CD4-positive, alpha-beta T cell (primary cell): ENCODE measurements at regions of chr2 and their contacts with region 1.

Region 1: DNA sequence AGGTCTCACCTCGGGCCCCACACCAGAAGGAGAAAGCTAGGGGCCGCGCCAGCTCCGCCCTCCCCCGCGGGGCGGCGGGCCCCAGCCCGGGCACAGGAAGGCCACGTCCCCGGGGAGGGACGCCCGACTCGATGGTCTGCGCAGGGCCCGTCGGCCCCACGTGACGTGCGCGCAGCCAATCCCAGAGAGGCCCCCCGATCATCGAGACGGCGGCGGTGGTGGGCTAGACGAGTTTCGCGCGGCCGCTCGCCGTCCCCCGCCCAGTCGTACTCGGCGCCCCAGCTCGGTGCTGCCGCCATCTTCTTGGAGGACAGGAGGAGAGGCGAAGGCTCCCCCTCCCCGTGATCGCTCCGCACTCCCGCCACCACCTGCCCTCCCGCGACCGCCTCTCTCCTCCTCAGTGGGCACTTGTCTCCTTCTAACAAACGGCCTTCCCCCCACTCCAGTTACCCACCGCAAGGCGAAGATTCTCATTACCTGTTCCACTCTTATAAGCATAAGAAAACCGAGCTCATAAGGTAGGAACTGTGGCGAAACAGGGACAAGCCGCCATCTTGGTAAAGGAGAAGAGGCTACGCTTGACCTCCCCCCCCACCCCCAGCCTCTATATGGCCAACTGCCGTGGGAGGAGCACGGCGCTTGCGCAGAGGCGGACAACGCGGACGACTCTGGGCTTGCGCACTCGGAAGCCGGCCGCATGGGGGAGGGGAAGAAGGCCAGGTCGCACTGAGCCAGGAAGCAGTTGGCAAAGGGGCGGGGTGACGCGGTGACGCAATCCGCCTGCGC is at the start of gene HDLBP:
- DNase-seq: peak; percentile 100
- ATAC-seq: peak; percentile 71
- H3K4me3 ChIP-seq: peak within 1 kb of the TSS; percentile 88
- H3K4me3 Mint-ChIP-seq: peak within 1 kb of the TSS; percentile 98
- H3K27ac ChIP-seq: peak within 1 kb of the TSS; percentile 96 to 98
- H3K27ac Mint-ChIP-seq: peak within 1 kb of the TSS; percentile 97
- H3K4me1 ChIP-seq: peaks cover 58% of the 10 kb centered on the region
- H3K4me1 Mint-ChIP-seq: peaks cover 83% of the 10 kb centered on the region
- H3K27me3 ChIP-seq: no peaks in the 10 kb centered on the region
- H3K27me3 Mint-ChIP-seq: no peaks in the 10 kb centered on the region
- CTCF ChIP-seq: peak; percentile 33
- total RNA-seq, gene HDLBP: 82.0 to 97.9 TPM

Region 2: DNA sequence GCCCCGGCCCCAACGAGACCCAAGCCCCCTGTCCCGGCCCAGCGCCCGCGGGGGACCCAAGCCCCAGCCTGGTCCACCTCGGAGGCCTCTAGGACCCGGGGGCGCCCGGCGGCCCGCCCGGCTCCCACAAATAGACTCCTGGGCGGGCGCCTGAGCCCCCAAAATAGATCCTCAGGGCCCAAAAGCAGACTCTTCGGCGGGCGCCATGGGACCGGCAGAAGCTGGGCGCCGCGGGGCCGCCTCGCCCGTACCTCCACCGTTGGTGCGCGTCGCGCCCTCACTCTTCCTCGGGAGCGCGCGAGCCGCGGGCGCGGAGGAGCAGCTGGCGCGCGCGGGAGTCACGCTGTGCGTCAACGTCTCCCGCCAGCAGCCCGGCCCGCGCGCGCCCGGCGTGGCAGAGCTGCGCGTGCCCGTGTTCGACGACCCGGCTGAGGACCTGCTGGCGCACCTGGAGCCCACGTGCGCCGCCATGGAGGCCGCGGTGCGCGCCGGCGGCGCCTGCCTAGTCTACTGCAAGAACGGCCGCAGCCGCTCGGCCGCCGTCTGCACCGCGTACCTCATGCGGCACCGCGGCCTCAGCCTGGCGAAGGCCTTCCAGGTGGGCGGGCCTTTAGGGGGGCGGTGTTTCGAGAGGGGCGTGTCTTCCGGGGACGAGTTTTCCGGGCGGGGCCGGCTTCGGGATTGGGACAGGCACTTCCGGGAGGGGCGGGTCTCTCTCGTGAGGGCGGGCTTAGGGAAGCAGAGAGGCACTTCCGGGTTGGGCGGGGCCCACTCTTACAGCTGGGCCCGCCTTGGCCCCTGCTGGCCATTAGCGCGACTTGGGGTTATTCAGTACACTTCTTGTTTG is 754.6 kb before region 1 on chr2:
- CTCF ChIA-PET with region 1: no interaction called
- POLR2A ChIA-PET with region 1: interaction called, 5 read pairs
- intact Hi-C with region 1: loop called in 1 of 2 experiments (anchors 10 kb)
- DNase-seq: peak in 13 of 14 experiments; percentile 99 to 100 (median 100)
- ATAC-seq: peak; percentile 50
- H3K4me3 ChIP-seq: peak overlapping the region; percentile 53
- H3K4me3 Mint-ChIP-seq: peak overlapping the region; percentile 90
- H3K27ac ChIP-seq: peak overlapping the region; percentile 62 to 95
- H3K27ac Mint-ChIP-seq: peak overlapping the region; percentile 98
- H3K4me1 ChIP-seq: peaks cover 87% of the 10 kb centered on the region
- H3K4me1 Mint-ChIP-seq: peaks cover 80% of the 10 kb centered on the region
- H3K27me3 ChIP-seq: no peaks in the 10 kb centered on the region
- H3K27me3 Mint-ChIP-seq: no peaks in the 10 kb centered on the region
- CTCF ChIP-seq: no peak

Region 3: GRCh38 chr2:241102239-241102803 is 213.0 kb before region 1 on chr2 and contains the start of gene MTERF4:
- CTCF ChIA-PET with region 1: no interaction called
- POLR2A ChIA-PET with region 1: interaction called, 16 read pairs
- intact Hi-C with region 1: loop called (anchors 5 kb)
- DNase-seq: peak; percentile 79 to 95 (median 88)
- ATAC-seq: peak; percentile 93
- H3K4me3 ChIP-seq: peak within 1 kb of the TSS; percentile 65
- H3K4me3 Mint-ChIP-seq: peak within 1 kb of the TSS; percentile 95
- H3K27ac ChIP-seq: peak within 1 kb of the TSS; percentile 84 to 90
- H3K27ac Mint-ChIP-seq: peak within 1 kb of the TSS; percentile 95
- H3K4me1 ChIP-seq: peaks cover 80% of the 10 kb centered on the region
- H3K4me1 Mint-ChIP-seq: peaks cover 73% of the 10 kb centered on the region
- H3K27me3 ChIP-seq: no peaks in the 10 kb centered on the region
- H3K27me3 Mint-ChIP-seq: no peaks in the 10 kb centered on the region
- CTCF ChIP-seq: no peak
- total RNA-seq, gene MTERF4: 84.0 to 87.5 TPM

Region 4: DNA sequence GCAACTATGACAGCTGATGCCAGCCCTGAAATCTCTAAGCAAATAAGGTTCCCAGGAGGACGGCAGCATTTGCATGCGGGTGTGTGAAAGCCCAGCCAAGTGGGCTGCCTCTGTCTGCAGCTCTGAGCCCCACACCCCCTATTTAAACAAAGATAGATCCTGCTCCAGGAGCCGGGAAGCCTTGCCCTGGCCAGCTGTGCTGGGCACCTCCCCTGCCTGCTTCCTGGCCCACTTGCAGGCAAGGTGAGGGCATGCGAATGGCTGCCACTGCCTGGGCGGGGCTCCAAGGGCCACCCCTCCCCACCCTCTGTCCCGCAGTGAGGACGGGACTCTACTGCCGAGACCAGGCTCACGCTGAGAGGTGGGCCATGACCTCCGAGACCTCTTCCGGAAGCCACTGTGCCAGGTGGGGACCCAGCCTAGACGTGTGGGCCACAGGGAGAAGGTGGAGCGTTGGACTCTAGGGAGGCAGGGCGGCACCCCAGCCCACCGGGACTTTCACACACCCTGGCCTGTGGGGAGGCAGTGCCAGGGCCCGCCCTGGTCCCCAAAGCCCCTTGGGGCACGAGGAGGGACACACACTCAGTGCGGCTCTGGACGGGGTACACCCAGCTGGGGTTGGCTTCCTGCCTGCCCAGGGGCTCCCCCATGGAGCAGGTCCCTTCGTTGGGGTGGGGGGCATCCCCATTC is 126.8 kb before region 1 on chr2 and contains the start of gene ANO7:
- CTCF ChIA-PET with region 1: no interaction called
- POLR2A ChIA-PET with region 1: no interaction called
- intact Hi-C with region 1: no loop called
- DNase-seq: no peak
- ATAC-seq: no peak
- H3K4me3 ChIP-seq: no peak within 1 kb of the TSS
- H3K4me3 Mint-ChIP-seq: no peak within 1 kb of the TSS
- H3K27ac ChIP-seq: no peak within 1 kb of the TSS
- H3K27ac Mint-ChIP-seq: no peak within 1 kb of the TSS
- H3K4me1 ChIP-seq: no peaks in the 10 kb centered on the region
- H3K4me1 Mint-ChIP-seq: no peaks in the 10 kb centered on the region
- H3K27me3 ChIP-seq: no peaks in the 10 kb centered on the region
- H3K27me3 Mint-ChIP-seq: no peaks in the 10 kb centered on the region
- CTCF ChIP-seq: no peak
- total RNA-seq, gene ANO7: 0.14 to 0.25 TPM

Region 5: DNA sequence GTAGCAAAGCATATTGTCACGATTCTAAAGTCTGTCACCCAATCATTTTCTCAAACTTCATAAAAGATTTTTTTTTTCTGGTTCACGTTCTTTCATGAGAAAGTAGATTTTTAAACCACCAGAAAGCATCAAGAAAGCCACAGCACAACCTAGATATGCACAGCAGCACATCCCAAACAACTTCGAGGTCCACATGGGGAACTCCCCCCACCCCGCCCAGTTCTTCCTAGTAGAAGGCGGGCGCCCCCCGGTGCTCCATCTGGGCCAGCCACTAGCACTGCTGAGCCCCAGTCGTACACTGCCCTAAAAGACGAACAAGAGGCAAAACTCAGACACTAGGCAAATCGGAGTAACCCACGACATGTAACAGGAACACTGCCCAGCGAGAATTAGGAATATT is 15.3 kb before region 1 on chr2:
- CTCF ChIA-PET with region 1: interaction called, 3 read pairs
- POLR2A ChIA-PET with region 1: interaction called, 31 read pairs
- intact Hi-C with region 1: loop called in 1 of 2 experiments (anchors 2 kb)
- DNase-seq: peak in 13 of 14 experiments; percentile 15 to 81 (median 48)
- ATAC-seq: peak; percentile 80
- H3K4me3 ChIP-seq: no peak overlapping the region
- H3K4me3 Mint-ChIP-seq: peak overlapping the region; percentile 44
- H3K27ac ChIP-seq: no peak overlapping the region
- H3K27ac Mint-ChIP-seq: peak overlapping the region; percentile 76
- H3K4me1 ChIP-seq: peaks cover 49% of the 10 kb centered on the region
- H3K4me1 Mint-ChIP-seq: peaks cover 77% of the 10 kb centered on the region
- H3K27me3 ChIP-seq: no peaks in the 10 kb centered on the region
- H3K27me3 Mint-ChIP-seq: no peaks in the 10 kb centered on the region
- CTCF ChIP-seq: peak; percentile 23

Region 6: GRCh38 chr2:241508240-241509154 is 193.2 kb after region 1 on chr2 and contains the start of gene STK25:
- CTCF ChIA-PET with region 1: no interaction called
- POLR2A ChIA-PET with region 1: no interaction called
- intact Hi-C with region 1: loop called (anchors 1 to 2 kb)
- DNase-seq: peak; percentile 94 to 99 (median 98)
- ATAC-seq: peak; percentile 95
- H3K4me3 ChIP-seq: peak within 1 kb of the TSS; percentile 63
- H3K4me3 Mint-ChIP-seq: peak within 1 kb of the TSS; percentile 94
- H3K27ac ChIP-seq: peak within 1 kb of the TSS; percentile 18 to 77
- H3K27ac Mint-ChIP-seq: peak within 1 kb of the TSS; percentile 78
- H3K4me1 ChIP-seq: peaks cover 30% of the 10 kb centered on the region
- H3K4me1 Mint-ChIP-seq: peaks cover 15% of the 10 kb centered on the region
- H3K27me3 ChIP-seq: no peaks in the 10 kb centered on the region
- H3K27me3 Mint-ChIP-seq: no peaks in the 10 kb centered on the region
- CTCF ChIP-seq: no peak
- total RNA-seq, gene STK25: 76.1 to 81.3 TPM

Region 7: GRCh38 chr2:241637000-241637791 is 321.9 kb after region 1 on chr2 and contains the starts of genes ATG4B and THAP4:
- CTCF ChIA-PET with region 1: no interaction called
- POLR2A ChIA-PET with region 1: interaction called, 13 read pairs
- intact Hi-C with region 1: loop called in 1 of 2 experiments (anchors 2 kb)
- DNase-seq: peak; percentile 52 to 89 (median 68)
- ATAC-seq: peak; percentile 66
- H3K4me3 ChIP-seq: peak within 1 kb of the TSS; percentile 76
- H3K4me3 Mint-ChIP-seq: peak within 1 kb of the TSS; percentile 95
- H3K27ac ChIP-seq: peak within 1 kb of the TSS; percentile 82 to 93
- H3K27ac Mint-ChIP-seq: peak within 1 kb of the TSS; percentile 84
- H3K4me1 ChIP-seq: peaks cover 45% of the 10 kb centered on the region
- H3K4me1 Mint-ChIP-seq: peaks cover 56% of the 10 kb centered on the region
- H3K27me3 ChIP-seq: no peaks in the 10 kb centered on the region
- H3K27me3 Mint-ChIP-seq: no peaks in the 10 kb centered on the region
- CTCF ChIP-seq: no peak
- total RNA-seq, gene ATG4B: 86.5 to 89.4 TPM
- total RNA-seq, gene THAP4: 27.5 to 31.4 TPM

Region 8: GRCh38 chr2:241673797-241674725 is 358.8 kb after region 1 on chr2:
- CTCF ChIA-PET with region 1: no interaction called
- POLR2A ChIA-PET with region 1: no interaction called
- intact Hi-C with region 1: no loop called
- DNase-seq: no peak
- ATAC-seq: no peak
- H3K4me3 ChIP-seq: no peak overlapping the region
- H3K4me3 Mint-ChIP-seq: no peak overlapping the region
- H3K27ac ChIP-seq: no peak overlapping the region
- H3K27ac Mint-ChIP-seq: peak overlapping the region; percentile 30
- H3K4me1 ChIP-seq: no peaks in the 10 kb centered on the region
- H3K4me1 Mint-ChIP-seq: peaks cover 5% of the 10 kb centered on the region
- H3K27me3 ChIP-seq: no peaks in the 10 kb centered on the region
- H3K27me3 Mint-ChIP-seq: no peaks in the 10 kb centered on the region
- CTCF ChIP-seq: no peak

Region 9: GRCh38 chr2:241702132-241703031 is 387.1 kb after region 1 on chr2:
- CTCF ChIA-PET with region 1: no interaction called
- POLR2A ChIA-PET with region 1: interaction called, 14 read pairs
- intact Hi-C with region 1: loop called in 1 of 2 experiments (anchors 5 kb)
- DNase-seq: peak; percentile 81 to 94 (median 84)
- ATAC-seq: peak; percentile 73
- H3K4me3 ChIP-seq: peak overlapping the region; percentile 73
- H3K4me3 Mint-ChIP-seq: peak overlapping the region; percentile 93
- H3K27ac ChIP-seq: peak overlapping the region; percentile 34 to 67
- H3K27ac Mint-ChIP-seq: peak overlapping the region; percentile 87
- H3K4me1 ChIP-seq: peaks cover 28% of the 10 kb centered on the region
- H3K4me1 Mint-ChIP-seq: peaks cover 28% of the 10 kb centered on the region
- H3K27me3 ChIP-seq: no peaks in the 10 kb centered on the region
- H3K27me3 Mint-ChIP-seq: no peaks in the 10 kb centered on the region
- CTCF ChIP-seq: peak; percentile 60